A673 (cell line): ENCODE measurements at regions of chr11 and their contacts with region 1.

Region 1: GRCh38 chr11:43130616-43131015 is 181.2 kb upstream of the API5 start:
- DNase-seq: peak; percentile 85
- H3K4me3 ChIP-seq: no peak overlapping the region
- H3K27ac ChIP-seq: peak overlapping the region; percentile 21
- H3K4me1 ChIP-seq: peaks cover 10% of the 10 kb centered on the region
- H3K27me3 ChIP-seq: no peaks in the 10 kb centered on the region
- CTCF ChIP-seq: peak; percentile 77

Region 2: GRCh38 chr11:42770444-42771065 is 360.1 kb before region 1 on chr11:
- CTCF ChIA-PET with region 1: interaction called, 9 read pairs
- POLR2A ChIA-PET with region 1: no interaction called
- intact Hi-C with region 1: loop called (anchors 1 kb)
- DNase-seq: peak; percentile 78
- H3K4me3 ChIP-seq: no peak overlapping the region
- H3K27ac ChIP-seq: no peak overlapping the region
- H3K4me1 ChIP-seq: no peaks in the 10 kb centered on the region
- H3K27me3 ChIP-seq: no peaks in the 10 kb centered on the region
- CTCF ChIP-seq: peak; percentile 100

Region 3: GRCh38 chr11:42996421-42997307 is 134.0 kb before region 1 on chr11:
- CTCF ChIA-PET with region 1: interaction called, 11 read pairs
- POLR2A ChIA-PET with region 1: no interaction called
- intact Hi-C with region 1: no loop called
- DNase-seq: no peak
- H3K4me3 ChIP-seq: no peak overlapping the region
- H3K27ac ChIP-seq: no peak overlapping the region
- H3K4me1 ChIP-seq: no peaks in the 10 kb centered on the region
- H3K27me3 ChIP-seq: no peaks in the 10 kb centered on the region
- CTCF ChIP-seq: no peak

Region 4: DNA sequence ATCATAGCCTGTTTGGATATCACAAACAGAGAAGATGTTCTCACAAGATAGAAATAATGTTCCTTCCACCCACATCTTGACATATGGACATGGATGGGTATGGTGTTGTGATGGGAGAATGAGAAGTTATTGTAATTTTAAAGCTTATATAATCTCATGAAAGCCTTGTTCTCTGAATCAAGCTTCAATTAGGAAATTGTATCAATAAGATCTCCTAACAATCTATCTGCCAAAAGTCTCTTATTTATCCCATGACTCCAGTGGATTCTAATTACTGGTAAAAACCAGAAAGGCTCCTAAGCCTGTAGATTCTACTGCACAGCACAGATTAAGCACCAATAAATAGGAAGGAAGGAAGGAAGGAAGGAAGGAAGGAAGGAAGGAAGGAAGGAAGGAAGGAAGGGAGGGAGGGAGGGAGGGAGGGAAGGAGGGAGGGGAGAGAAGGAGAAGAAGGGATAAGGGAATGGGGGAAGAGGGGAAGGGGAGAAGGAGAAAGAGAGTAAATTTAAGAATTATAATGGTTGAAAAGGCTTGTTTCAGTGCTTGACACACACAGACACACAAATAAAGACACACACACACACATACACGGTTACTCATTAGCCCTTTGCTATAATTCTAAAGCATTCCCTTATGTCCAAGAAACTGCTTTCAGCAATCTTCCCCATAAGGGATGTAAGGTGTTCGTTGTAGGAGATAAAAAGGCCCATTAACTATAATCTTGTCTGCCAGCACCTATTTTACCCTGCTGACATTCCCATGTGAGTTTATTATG is 76.8 kb before region 1 on chr11:
- CTCF ChIA-PET with region 1: no interaction called
- POLR2A ChIA-PET with region 1: no interaction called
- intact Hi-C with region 1: loop called (anchors 1 kb)
- DNase-seq: peak; percentile 93
- H3K4me3 ChIP-seq: no peak overlapping the region
- H3K27ac ChIP-seq: peak overlapping the region; percentile 88
- H3K4me1 ChIP-seq: peaks cover 32% of the 10 kb centered on the region
- H3K27me3 ChIP-seq: no peaks in the 10 kb centered on the region
- CTCF ChIP-seq: no peak

Region 5: DNA sequence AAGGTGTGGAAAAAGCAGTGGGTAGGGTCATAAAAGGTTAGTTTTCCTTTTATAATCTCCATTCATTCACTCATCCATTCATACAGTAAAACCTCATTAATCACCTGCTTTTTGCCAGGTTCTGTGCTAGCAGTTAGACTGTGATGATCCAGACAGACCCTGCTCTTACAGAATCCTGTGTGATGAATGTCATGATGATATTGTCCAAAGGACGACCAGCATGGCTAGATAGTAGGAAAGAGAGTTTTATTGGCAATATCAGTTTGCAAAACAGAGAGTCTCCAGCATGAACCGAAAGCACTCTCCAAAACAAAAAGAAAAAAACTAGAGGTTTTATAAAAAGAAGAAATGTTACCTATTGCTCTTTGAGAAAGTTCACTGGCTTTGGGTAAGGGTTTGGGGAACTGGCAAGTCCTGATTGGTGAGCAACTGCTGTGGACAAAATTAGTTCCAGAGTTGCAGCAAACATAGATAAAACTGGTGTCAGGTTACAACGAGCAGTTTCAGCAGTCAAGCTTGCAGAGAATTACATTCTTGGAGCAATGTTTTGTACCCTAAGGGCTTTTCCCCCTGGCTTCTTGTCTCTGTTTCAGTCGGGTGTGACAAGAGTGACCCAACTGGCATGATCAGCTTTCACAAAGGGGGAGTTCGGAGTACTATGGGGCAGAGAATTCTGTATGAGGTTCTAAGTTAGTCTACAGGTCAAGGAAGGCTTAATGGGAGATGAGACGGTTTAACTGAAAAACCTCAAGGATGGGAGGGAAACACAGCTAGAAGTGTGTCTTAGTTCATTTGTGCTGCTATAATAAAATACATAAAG is 608.2 kb after region 1 on chr11:
- CTCF ChIA-PET with region 1: no interaction called
- POLR2A ChIA-PET with region 1: no interaction called
- intact Hi-C with region 1: no loop called
- DNase-seq: peak; percentile 90
- H3K4me3 ChIP-seq: peak overlapping the region; percentile 4
- H3K27ac ChIP-seq: peak overlapping the region; percentile 68
- H3K4me1 ChIP-seq: peaks cover 47% of the 10 kb centered on the region
- H3K27me3 ChIP-seq: no peaks in the 10 kb centered on the region
- CTCF ChIP-seq: no peak

Region 6: GRCh38 chr11:43810929-43811596 is 680.4 kb after region 1 on chr11:
- CTCF ChIA-PET with region 1: no interaction called
- POLR2A ChIA-PET with region 1: no interaction called
- intact Hi-C with region 1: no loop called
- DNase-seq: peak; percentile 84
- H3K4me3 ChIP-seq: no peak overlapping the region
- H3K27ac ChIP-seq: no peak overlapping the region
- H3K4me1 ChIP-seq: peaks cover 11% of the 10 kb centered on the region
- H3K27me3 ChIP-seq: no peaks in the 10 kb centered on the region
- CTCF ChIP-seq: peak; percentile 98